Dorsolateral prefrontal cortex (tissue), 120 donors: ENCODE measurements at regions of chr12 and their contacts with region 1.

Region 1: DNA sequence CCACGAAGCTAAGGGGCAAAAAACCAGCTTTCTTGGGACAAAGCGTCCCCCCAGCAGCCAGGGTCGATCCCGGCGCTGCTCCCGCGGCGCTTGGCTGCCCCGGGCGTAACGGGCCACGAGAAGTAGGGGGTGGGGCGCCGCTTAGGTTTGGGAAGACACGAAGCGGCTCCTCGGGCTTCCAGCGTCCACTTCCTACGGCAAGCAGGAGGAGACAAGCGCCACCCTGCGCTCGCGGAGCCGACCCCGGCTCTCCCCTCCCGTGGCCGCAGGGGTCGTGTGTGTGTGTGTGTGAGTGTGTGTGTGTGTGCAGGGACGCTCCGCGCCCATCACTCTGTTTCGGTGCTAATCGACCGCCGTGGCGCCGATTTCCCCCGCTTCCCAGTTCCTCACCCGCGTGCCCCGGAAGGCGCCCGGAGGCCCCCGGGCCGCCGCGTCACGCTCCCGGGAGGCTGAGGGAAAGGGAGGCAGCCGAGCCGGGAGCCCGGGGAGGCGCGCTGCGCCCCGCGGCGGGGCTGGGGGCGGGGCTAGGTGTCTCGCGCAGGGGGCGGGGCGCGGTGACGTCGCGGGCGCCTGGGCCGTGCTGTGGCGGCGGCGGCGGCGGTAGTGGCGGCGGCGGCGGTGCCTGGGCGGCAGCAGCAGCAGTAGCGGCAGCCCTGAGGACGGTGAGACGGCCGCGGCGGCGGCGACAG is at the start of gene ERC1:
- DNase-seq: peak; percentile 76 to 94 (median 84)
- H3K4me3 ChIP-seq: peak within 1 kb of the TSS; percentile 60 to 97 (median 89)
- H3K27ac ChIP-seq: peak within 1 kb of the TSS; percentile 75 to 99 (median 96)
- H3K27me3 ChIP-seq: no peaks in the 10 kb centered on the region
- CTCF ChIP-seq: peak in 29 of 56 donors; percentile 5 to 57 (median 22)
- total RNA-seq, gene ERC1: 50.9 to 130 (median 83.8) TPM

Region 2: GRCh38 chr12:1044696-1045095 is 53.9 kb after region 1 on chr12:
- intact Hi-C with region 1: no loop called
- DNase-seq: no peak
- H3K4me3 ChIP-seq: no peak overlapping the region
- H3K27ac ChIP-seq: no peak overlapping the region
- H3K27me3 ChIP-seq: no peaks in the 10 kb centered on the region
- CTCF ChIP-seq: no peak

Region 3: GRCh38 chr12:1056390-1056789 is 65.6 kb after region 1 on chr12:
- intact Hi-C with region 1: no loop called
- DNase-seq: no peak
- H3K4me3 ChIP-seq: no peak overlapping the region
- H3K27ac ChIP-seq: peak overlapping the region in 1 of 59 donors; percentile 63
- H3K27me3 ChIP-seq: no peaks in the 10 kb centered on the region
- CTCF ChIP-seq: no peak

Region 4: DNA sequence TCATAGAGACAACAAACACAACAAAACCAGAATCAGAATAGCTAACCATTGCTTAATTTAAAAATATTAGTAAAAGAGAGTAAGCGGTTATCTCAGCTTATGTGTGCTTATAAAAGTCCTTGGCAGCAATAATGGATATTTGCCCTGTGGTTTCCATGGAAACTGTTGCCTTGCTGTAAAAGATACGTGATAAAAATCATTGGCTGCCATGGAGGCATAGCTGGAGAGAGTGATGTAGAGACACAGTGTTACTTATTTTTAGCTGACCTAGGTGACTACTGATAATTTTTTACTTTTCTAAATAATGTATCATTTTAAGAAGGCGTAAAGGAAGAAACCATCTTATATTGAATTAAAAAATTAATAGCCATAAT is 93.1 kb after region 1 on chr12:
- intact Hi-C with region 1: loop called in 1 of 2 experiments (anchors 5 kb)
- DNase-seq: peak in 1 of 10 donors; percentile 37
- H3K4me3 ChIP-seq: peak overlapping the region; percentile 9 to 68 (median 47)
- H3K27ac ChIP-seq: peak overlapping the region in 55 of 59 donors; percentile 1 to 94 (median 75)
- H3K27me3 ChIP-seq: no peaks in the 10 kb centered on the region
- CTCF ChIP-seq: no peak

Region 5: DNA sequence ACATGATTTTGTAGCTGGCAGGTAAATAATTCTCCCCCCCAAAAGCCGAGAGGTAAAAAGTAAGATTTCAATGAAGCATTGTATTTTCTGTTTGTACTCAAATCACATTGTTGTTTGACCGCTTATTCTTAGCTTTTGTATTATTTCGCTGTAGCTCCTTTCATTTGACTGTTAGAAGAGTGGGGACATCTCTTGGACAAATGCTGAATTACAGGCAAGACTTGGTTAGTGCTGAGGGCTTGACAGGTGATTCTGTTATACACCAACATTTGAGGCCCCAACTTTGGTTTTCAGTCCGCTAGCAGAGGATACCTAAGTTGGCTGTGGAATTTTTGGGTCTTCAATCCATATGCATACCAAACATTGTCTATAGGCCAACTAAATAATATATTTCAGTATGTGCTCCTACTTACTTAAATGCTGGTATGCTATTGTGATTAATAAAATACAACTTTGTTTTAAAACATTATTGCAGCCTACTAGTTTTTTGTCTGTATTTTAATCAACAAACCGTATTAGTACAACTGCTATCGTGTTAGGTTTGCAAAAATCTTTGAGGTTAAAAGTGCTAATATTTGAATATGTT is 102.5 kb after region 1 on chr12:
- intact Hi-C with region 1: loop called in 1 of 2 experiments (anchors 10 kb)
- DNase-seq: no peak
- H3K4me3 ChIP-seq: no peak overlapping the region
- H3K27ac ChIP-seq: peak overlapping the region in 3 of 59 donors; percentile 9 to 56 (median 13)
- H3K27me3 ChIP-seq: no peaks in the 10 kb centered on the region
- CTCF ChIP-seq: peak; percentile 29 to 85 (median 68)

Region 6: GRCh38 chr12:1594261-1595025 is 603.6 kb after region 1 on chr12 and contains the start of gene FBXL14:
- intact Hi-C with region 1: loop called (anchors 2 to 5 kb)
- DNase-seq: peak; percentile 83 to 93 (median 90)
- H3K4me3 ChIP-seq: peak within 1 kb of the TSS; percentile 63 to 93 (median 81)
- H3K27ac ChIP-seq: peak within 1 kb of the TSS; percentile 91 to 100 (median 99)
- H3K27me3 ChIP-seq: no peaks in the 10 kb centered on the region
- CTCF ChIP-seq: peak in 14 of 56 donors; percentile 2 to 31 (median 13)
- total RNA-seq, gene FBXL14: 26.6 to 73.6 (median 35.7) TPM